IMR-90 (cell line): ENCODE measurements at regions of chr2 and their contacts with region 1.

Region 1: GRCh38 chr2:227406177-227407031 is 18.7 kb upstream of the SCYGR1 start:
- DNase-seq: peak; percentile 99
- ATAC-seq: peak; percentile 91
- H3K4me3 ChIP-seq: no peak overlapping the region
- H3K27ac ChIP-seq: peak overlapping the region; percentile 77
- H3K4me1 ChIP-seq: peaks cover 1% of the 10 kb centered on the region; the same call in 1 of the 2 replicates
- H3K27me3 ChIP-seq: no peaks in the 10 kb centered on the region
- CTCF ChIP-seq: peak; percentile 96
- POLR2A ChIP-seq: no peak
- RAD21 ChIP-seq: peak; percentile 95

Region 2: GRCh38 chr2:227132986-227133385 is 273.4 kb before region 1 on chr2:
- CTCF ChIA-PET with region 1: no interaction called
- POLR2A ChIA-PET with region 1: no interaction called
- dilution Hi-C with region 1: no loop called
- in situ Hi-C with region 1: no loop called
- intact Hi-C with region 1: loop called (anchors 10 kb)
- DNase-seq: no peak
- ATAC-seq: no peak
- H3K4me3 ChIP-seq: no peak overlapping the region
- H3K27ac ChIP-seq: no peak overlapping the region
- H3K4me1 ChIP-seq: no peaks in the 10 kb centered on the region
- H3K27me3 ChIP-seq: peaks cover 38% of the 10 kb centered on the region
- CTCF ChIP-seq: no peak
- POLR2A ChIP-seq: no peak
- RAD21 ChIP-seq: no peak

Region 3: DNA sequence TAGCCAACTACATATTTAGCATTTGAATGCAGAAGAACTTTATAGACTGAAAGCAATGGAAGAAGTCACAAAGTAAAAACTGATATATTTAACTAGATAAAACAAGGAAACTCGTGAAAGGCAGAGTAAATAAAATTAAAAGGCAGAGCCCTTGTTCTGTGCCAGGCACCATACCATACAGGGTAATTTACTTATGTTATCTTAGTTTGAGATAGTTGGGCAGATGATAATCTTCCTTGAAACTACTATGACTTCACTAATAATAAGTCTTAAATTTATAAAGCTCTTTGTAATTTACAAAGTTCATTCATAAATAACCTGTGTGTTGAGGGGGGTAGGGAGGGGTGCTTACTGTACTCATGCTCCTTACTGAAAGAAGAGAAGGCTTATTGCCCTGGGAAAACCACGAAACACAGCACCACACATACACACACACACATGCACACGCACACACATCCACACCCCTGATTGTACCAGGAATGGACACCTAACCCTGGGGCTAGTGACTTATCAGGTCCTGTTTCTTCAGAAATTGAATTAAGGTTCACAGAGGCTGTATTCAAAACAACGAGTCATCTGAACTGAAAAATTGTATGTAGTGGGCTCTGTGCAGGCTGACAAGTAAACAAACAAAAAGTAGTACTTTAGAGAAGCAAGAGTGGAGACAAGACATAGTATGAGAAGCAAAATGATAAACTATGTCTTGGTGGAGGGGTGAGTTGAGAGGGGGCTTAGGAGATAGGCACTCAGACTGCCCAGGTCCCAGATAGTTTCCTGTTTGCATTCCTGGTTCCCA is 103.6 kb after region 1 on chr2:
- CTCF ChIA-PET with region 1: no interaction called
- POLR2A ChIA-PET with region 1: no interaction called
- dilution Hi-C with region 1: no loop called
- in situ Hi-C with region 1: no loop called
- intact Hi-C with region 1: loop called (anchors 5 kb)
- DNase-seq: peak; percentile 51
- ATAC-seq: peak; percentile 47
- H3K4me3 ChIP-seq: no peak overlapping the region
- H3K27ac ChIP-seq: no peak overlapping the region
- H3K4me1 ChIP-seq: peaks cover 7% of the 10 kb centered on the region
- H3K27me3 ChIP-seq: no peaks in the 10 kb centered on the region
- CTCF ChIP-seq: no peak
- POLR2A ChIP-seq: no peak
- RAD21 ChIP-seq: no peak

Region 4: DNA sequence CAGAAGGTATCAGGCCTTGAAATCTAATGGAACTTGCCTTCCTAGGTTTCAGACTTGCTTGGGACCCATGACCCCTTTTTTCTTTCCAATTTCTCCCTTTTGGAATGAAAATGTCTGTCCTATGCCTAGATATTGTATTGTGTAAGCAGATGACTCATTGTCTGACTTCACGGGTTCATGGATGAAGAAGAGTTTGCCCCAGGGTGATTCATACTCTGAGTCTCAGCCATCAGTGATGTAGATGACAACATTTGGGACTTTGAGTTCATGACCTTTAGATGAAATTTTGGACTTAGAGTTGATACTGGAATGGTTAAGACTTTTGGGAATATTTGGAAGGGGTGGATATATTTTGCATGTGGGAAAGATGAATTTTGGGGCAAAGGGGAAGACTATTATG is 249.1 kb after region 1 on chr2:
- CTCF ChIA-PET with region 1: interaction called, 5 read pairs
- POLR2A ChIA-PET with region 1: no interaction called
- dilution Hi-C with region 1: no loop called
- in situ Hi-C with region 1: no loop called
- intact Hi-C with region 1: loop called (anchors 1 kb)
- DNase-seq: peak; percentile 91
- ATAC-seq: peak; percentile 81
- H3K4me3 ChIP-seq: no peak overlapping the region
- H3K27ac ChIP-seq: no peak overlapping the region
- H3K4me1 ChIP-seq: no peaks in the 10 kb centered on the region
- H3K27me3 ChIP-seq: no peaks in the 10 kb centered on the region
- CTCF ChIP-seq: no peak
- POLR2A ChIP-seq: no peak
- RAD21 ChIP-seq: no peak

Region 5: GRCh38 chr2:227766373-227766883 is 360.0 kb after region 1 on chr2:
- CTCF ChIA-PET with region 1: interaction called, 24 read pairs
- POLR2A ChIA-PET with region 1: no interaction called
- dilution Hi-C with region 1: no loop called
- in situ Hi-C with region 1: loop called (anchors 5 kb)
- intact Hi-C with region 1: loop called (anchors 1 kb)
- DNase-seq: peak; percentile 68
- ATAC-seq: peak; percentile 98
- H3K4me3 ChIP-seq: no peak overlapping the region
- H3K27ac ChIP-seq: no peak overlapping the region
- H3K4me1 ChIP-seq: no peaks in the 10 kb centered on the region
- H3K27me3 ChIP-seq: no peaks in the 10 kb centered on the region
- CTCF ChIP-seq: peak; percentile 84
- POLR2A ChIP-seq: no peak
- RAD21 ChIP-seq: peak; percentile 86

Region 6: GRCh38 chr2:227871375-227871788 is 465.0 kb after region 1 on chr2 and contains the start of gene DAW1:
- CTCF ChIA-PET with region 1: no interaction called
- POLR2A ChIA-PET with region 1: no interaction called
- dilution Hi-C with region 1: no loop called
- in situ Hi-C with region 1: loop called (anchors 10 kb)
- intact Hi-C with region 1: no loop called
- DNase-seq: peak; percentile 56
- ATAC-seq: peak; percentile 83
- H3K4me3 ChIP-seq: peak within 1 kb of the TSS; percentile 45
- H3K27ac ChIP-seq: peak within 1 kb of the TSS; percentile 78
- H3K4me1 ChIP-seq: peaks cover 7% of the 10 kb centered on the region
- H3K27me3 ChIP-seq: no peaks in the 10 kb centered on the region
- CTCF ChIP-seq: no peak
- POLR2A ChIP-seq: 0 out of 2 replicates have a peak, but pooled peaks have one; percentile 25
- RAD21 ChIP-seq: no peak
- total RNA-seq, gene DAW1: 1.4 TPM in 2 replicates

Region 7: GRCh38 chr2:228657807-228658402 is 1251.5 kb after region 1 on chr2:
- CTCF ChIA-PET with region 1: no interaction called
- POLR2A ChIA-PET with region 1: no interaction called
- dilution Hi-C with region 1: no loop called
- in situ Hi-C with region 1: no loop called
- intact Hi-C with region 1: loop called (anchors 10 kb)
- DNase-seq: peak; percentile 46
- ATAC-seq: peak; percentile 21; the same call in 1 of the 2 replicates
- H3K4me3 ChIP-seq: no peak overlapping the region
- H3K27ac ChIP-seq: no peak overlapping the region
- H3K4me1 ChIP-seq: no peaks in the 10 kb centered on the region
- H3K27me3 ChIP-seq: no peaks in the 10 kb centered on the region
- CTCF ChIP-seq: peak; percentile 51
- POLR2A ChIP-seq: no peak
- RAD21 ChIP-seq: peak; percentile 67